BJ (cell line): ENCODE measurements at regions of chr4 and their contacts with region 1.

Region 1: GRCh38 chr4:41573502-41574001 is 35.6 kb downstream of the LIMCH1 start:
- DNase-seq: peak; percentile 30
- H3K4me3 ChIP-seq: no peak overlapping the region
- H3K27me3 ChIP-seq: no peaks in the 10 kb centered on the region
- CTCF ChIP-seq: no peak

Region 2: GRCh38 chr4:40289366-40290188 is 1284.0 kb before region 1 on chr4:
- CTCF ChIA-PET with region 1: no interaction called
- POLR2A ChIA-PET with region 1: interaction called, 10 read pairs
- DNase-seq: no peak
- H3K4me3 ChIP-seq: no peak overlapping the region
- H3K27me3 ChIP-seq: 0 out of 2 replicates have a peak, but pooled peaks cover 2% of the 10 kb centered on the region
- CTCF ChIP-seq: no peak

Region 3: GRCh38 chr4:42070463-42070862 is 496.9 kb after region 1 on chr4:
- CTCF ChIA-PET with region 1: no interaction called
- POLR2A ChIA-PET with region 1: no interaction called
- DNase-seq: no peak
- H3K4me3 ChIP-seq: no peak overlapping the region
- H3K27me3 ChIP-seq: no peaks in the 10 kb centered on the region
- CTCF ChIP-seq: no peak